ENCODE measurements at regions of chr6 and their contacts with region 1.

Region 1: DNA sequence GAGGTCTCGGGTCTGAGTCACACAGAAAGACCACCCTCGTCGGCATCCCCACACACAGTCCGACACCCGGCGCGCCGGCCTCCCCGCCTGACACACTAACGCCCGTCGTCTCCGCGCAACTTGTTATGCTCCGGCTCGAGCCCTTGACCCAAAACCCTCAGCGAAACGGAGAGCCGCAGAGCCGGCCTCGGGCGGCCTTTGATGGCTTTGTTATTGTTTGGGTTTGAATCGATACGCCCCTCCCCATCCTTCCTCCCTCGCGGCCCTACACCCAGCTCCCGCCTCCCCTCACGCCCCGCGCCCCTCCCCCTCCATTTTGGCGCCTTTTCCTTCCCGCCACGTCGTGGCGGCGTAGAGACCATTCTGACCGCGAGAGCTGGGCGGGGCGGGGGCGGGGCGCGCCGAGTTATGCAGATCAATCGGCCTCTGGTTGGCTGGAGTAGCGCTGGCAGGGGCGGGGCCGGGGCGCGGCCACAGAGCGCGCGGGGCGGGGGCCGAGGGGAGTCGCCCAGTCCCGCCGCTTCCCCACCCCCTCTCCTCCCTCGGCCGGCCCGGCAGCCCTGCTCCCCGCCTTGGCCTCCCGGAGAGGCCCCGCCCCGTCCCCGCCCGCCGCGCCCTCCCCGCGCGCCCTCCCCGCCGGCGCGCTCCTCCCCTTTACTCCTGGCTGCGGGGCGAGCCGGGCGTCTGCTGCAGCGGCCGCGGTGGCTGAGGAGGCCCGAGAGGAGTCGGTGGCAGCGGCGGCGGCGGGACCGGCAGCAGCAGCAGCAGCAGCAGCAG is at the start of gene PIM1:
- DNase-seq: peak; percentile 99
- ATAC-seq: peak; percentile 90
- H3K4me3 Mint-ChIP-seq: peak within 1 kb of the TSS; percentile 92
- H3K27ac Mint-ChIP-seq: peak within 1 kb of the TSS; percentile 99
- H3K4me1 Mint-ChIP-seq: peaks cover 51% of the 10 kb centered on the region
- H3K27me3 Mint-ChIP-seq: no peaks in the 10 kb centered on the region
- CTCF ChIP-seq: no peak
- total RNA-seq, gene PIM1: 64.7 to 81.2 TPM (median 78.1 TPM) in 3 replicates

Region 2: DNA sequence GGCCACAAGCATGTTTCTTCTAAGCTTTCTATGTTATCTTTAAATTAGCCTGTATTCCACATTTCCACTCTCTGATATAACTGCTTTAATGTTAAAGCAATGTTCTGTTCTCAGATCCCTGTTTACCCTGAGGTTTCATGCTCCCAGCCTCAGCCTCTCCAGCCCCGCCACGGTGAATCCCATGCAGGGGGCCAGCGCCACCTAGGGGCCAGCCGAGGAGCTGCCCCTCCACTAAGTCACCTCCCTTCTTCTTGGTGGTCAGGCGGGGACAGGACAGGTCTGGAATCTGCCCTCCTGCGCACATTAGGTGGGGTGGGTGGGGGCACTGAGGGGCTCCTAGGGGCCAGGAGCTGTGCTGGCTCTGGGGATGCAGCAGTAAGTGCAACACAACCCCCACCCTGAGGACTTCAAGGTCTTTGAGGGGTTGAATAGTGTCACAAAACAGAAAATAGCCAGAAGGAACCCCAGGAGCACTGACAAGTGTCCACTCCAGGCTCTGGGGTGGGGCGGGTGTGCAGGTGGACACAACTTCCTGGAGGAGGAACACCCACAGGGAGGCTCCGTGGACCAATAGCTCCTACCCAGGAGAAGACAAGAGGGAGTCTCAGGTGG is 410.4 kb before region 1 on chr6:
- CTCF ChIA-PET with region 1: no interaction called
- POLR2A ChIA-PET with region 1: no interaction called
- DNase-seq: peak; percentile 88
- ATAC-seq: peak; percentile 92
- H3K4me3 Mint-ChIP-seq: no peak overlapping the region
- H3K27ac Mint-ChIP-seq: 0 out of 2 replicates have a peak overlapping the region, but pooled peaks have one; percentile 5
- H3K4me1 Mint-ChIP-seq: peaks cover 15% of the 10 kb centered on the region
- H3K27me3 Mint-ChIP-seq: no peaks in the 10 kb centered on the region
- CTCF ChIP-seq: peak; percentile 99

Region 3: DNA sequence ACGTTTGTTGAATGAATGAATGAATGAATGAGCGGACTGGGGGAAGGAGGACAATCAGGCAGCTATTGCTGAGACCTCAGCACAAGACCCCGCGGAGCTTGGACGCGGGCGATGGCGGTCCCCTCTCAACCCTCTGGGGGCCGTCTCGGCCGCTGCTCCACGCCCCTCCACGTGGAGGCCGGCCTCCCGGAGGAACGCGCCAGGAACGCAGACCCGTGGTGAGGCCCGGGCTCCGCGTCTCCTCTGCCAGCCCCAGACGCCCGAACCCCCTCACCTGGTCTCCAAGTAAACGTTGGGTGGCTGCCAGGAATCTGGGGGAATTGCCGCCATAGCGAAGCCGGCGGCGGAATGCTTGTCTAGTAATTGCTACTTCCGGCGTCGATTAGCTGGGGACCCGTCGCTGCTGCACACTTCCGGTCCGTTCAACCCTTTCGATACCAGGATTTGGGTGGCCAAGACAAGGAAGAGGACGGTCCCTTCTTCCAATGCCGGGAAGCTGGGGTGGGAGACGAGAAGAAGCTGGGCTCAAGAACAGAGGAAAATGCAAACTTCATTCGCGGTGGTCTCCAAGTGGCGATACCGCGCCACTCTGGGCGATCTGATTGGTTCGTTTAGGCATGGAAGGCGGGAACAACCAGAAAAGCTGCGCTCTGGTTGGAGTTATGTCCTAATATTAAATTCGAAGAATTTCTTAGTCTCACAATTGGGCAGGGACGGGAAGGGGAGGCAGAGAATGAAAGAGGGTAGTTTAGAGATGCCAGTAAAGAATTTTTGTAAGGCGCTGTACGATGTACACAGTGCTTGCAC is 295.0 kb before region 1 on chr6 and contains the start of gene PPIL1:
- CTCF ChIA-PET with region 1: no interaction called
- POLR2A ChIA-PET with region 1: no interaction called
- DNase-seq: peak; percentile 74
- ATAC-seq: peak; percentile 87
- H3K4me3 Mint-ChIP-seq: peak within 1 kb of the TSS; percentile 93
- H3K27ac Mint-ChIP-seq: peak within 1 kb of the TSS; percentile 100
- H3K4me1 Mint-ChIP-seq: peaks cover 19% of the 10 kb centered on the region
- H3K27me3 Mint-ChIP-seq: peaks cover 17% of the 10 kb centered on the region
- CTCF ChIP-seq: no peak
- total RNA-seq, gene PPIL1: 64.2 to 69.8 TPM (median 66.6 TPM) in 3 replicates

Region 4: GRCh38 chr6:37029249-37029971 is 140.3 kb before region 1 on chr6:
- CTCF ChIA-PET with region 1: interaction called, 17 read pairs
- POLR2A ChIA-PET with region 1: interaction called, 4 read pairs
- DNase-seq: peak; percentile 73
- ATAC-seq: peak; percentile 86
- H3K4me3 Mint-ChIP-seq: no peak overlapping the region
- H3K27ac Mint-ChIP-seq: no peak overlapping the region
- H3K4me1 Mint-ChIP-seq: no peaks in the 10 kb centered on the region
- H3K27me3 Mint-ChIP-seq: no peaks in the 10 kb centered on the region
- CTCF ChIP-seq: peak; percentile 75

Region 5: GRCh38 chr6:37059344-37060206 is 110.1 kb before region 1 on chr6:
- CTCF ChIA-PET with region 1: interaction called, 19 read pairs
- POLR2A ChIA-PET with region 1: interaction called, 4 read pairs
- DNase-seq: peak; percentile 73
- ATAC-seq: peak; percentile 72
- H3K4me3 Mint-ChIP-seq: peak overlapping the region; percentile 47
- H3K27ac Mint-ChIP-seq: peak overlapping the region; percentile 99
- H3K4me1 Mint-ChIP-seq: peaks cover 51% of the 10 kb centered on the region
- H3K27me3 Mint-ChIP-seq: no peaks in the 10 kb centered on the region
- CTCF ChIP-seq: 0 out of 2 replicates have a peak, but pooled peaks have one; percentile 21

Region 6: DNA sequence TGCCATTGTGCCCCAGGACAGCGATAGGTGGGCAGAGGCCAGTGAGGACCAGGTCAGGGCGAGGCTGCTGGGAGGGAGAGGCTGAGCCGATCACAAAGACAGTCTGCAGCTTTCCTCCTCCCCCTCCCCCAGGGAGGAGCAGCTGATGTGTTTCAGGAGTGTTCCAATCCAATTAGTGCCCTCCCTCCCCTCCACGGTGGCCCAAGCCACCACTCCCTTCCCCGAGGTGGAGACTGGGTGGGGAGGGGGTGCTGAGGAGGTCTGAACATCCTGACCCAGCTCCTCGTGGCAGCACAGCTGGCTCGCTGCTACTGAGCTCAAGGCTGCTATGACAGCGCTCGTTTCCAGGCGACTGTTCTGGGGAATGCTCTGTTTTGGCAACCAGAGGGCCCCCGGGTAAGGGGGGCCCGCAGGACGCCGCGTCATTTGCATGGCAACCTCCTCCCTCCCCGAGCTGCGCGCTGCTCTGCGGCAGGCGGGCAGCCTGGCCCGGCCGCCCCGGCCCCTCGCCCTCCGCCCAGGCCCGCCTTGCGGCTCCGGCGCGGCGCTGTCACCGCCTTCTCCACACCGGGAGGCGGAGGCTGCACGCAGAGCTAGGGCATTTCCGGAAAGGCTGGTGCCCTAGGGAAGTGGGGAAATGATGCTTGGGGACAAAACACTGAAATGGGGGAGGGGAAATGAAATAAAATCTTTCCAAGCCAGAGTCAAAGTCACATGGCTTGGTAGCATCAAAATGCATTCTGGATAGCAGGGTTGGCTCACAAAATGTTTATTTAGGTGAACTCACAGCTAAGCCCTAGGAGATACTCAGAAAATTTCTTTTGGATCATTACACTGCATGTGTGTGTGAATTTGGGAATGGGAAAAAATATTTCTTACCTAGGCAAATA is 67.2 kb before region 1 on chr6:
- CTCF ChIA-PET with region 1: interaction called, 37 read pairs
- POLR2A ChIA-PET with region 1: interaction called, 38 read pairs
- DNase-seq: peak; percentile 92
- ATAC-seq: peak; percentile 80
- H3K4me3 Mint-ChIP-seq: peak overlapping the region; percentile 66
- H3K27ac Mint-ChIP-seq: peak overlapping the region; percentile 94
- H3K4me1 Mint-ChIP-seq: peaks cover 62% of the 10 kb centered on the region
- H3K27me3 Mint-ChIP-seq: no peaks in the 10 kb centered on the region; the same call in 1 of the 2 replicates
- CTCF ChIP-seq: no peak

Region 7: GRCh38 chr6:37131104-37131959 is 38.4 kb before region 1 on chr6:
- CTCF ChIA-PET with region 1: interaction called, 29 read pairs
- POLR2A ChIA-PET with region 1: interaction called, 183 read pairs
- DNase-seq: no peak
- ATAC-seq: peak; percentile 17
- H3K4me3 Mint-ChIP-seq: no peak overlapping the region; the same call in 1 of the 2 replicates
- H3K27ac Mint-ChIP-seq: peak overlapping the region; percentile 91
- H3K4me1 Mint-ChIP-seq: peaks cover 83% of the 10 kb centered on the region
- H3K27me3 Mint-ChIP-seq: no peaks in the 10 kb centered on the region
- CTCF ChIP-seq: no peak

Region 8: DNA sequence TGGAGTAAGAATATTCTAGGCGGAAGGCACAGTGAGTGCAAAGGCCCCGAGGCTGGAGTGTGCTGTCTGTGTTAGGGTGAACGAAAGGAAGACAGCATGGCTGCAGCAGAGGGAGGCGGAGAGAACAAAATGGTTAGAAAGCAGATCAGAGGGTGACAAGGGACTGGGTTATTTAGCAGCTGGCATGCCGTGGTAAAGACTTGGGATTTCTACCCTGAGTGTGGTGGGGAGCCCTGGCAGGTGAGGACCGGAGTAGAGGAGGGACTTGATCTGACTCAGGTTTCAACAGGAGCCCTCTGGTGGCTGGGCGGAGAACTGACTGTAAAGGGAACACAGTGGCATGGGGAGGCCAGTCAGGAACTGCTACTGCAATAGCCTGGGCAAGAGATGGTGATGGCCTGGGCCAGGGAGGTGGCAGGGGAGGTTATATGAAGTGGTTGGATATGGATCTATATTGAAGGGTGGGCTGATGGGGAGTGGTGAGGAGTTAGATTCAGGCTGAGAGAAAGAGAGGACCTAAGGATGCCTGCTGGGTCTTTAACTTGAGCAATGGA is 38.3 kb after region 1 on chr6:
- CTCF ChIA-PET with region 1: interaction called, 34 read pairs
- POLR2A ChIA-PET with region 1: no interaction called
- DNase-seq: peak; percentile 97
- ATAC-seq: peak; percentile 94
- H3K4me3 Mint-ChIP-seq: no peak overlapping the region
- H3K27ac Mint-ChIP-seq: no peak overlapping the region
- H3K4me1 Mint-ChIP-seq: peaks cover 5% of the 10 kb centered on the region; the same call in 1 of the 2 replicates
- H3K27me3 Mint-ChIP-seq: peaks cover 3% of the 10 kb centered on the region; the same call in 1 of the 2 replicates
- CTCF ChIP-seq: peak; percentile 70

Measured in WTC11 (cell line).